ENCODE measurements at regions of chr7 and their contacts with region 1.

Region 1: GRCh38 chr7:38660427-38661099 is 29.4 kb upstream of the AMPH start:
- DNase-seq: peak; percentile 73
- H3K4me3 ChIP-seq: no peak overlapping the region
- H3K27ac ChIP-seq: no peak overlapping the region
- H3K4me1 ChIP-seq: peaks cover 11% of the 10 kb centered on the region
- H3K27me3 ChIP-seq: peaks cover 17% of the 10 kb centered on the region
- CTCF ChIP-seq: peak; percentile 88

Region 2: DNA sequence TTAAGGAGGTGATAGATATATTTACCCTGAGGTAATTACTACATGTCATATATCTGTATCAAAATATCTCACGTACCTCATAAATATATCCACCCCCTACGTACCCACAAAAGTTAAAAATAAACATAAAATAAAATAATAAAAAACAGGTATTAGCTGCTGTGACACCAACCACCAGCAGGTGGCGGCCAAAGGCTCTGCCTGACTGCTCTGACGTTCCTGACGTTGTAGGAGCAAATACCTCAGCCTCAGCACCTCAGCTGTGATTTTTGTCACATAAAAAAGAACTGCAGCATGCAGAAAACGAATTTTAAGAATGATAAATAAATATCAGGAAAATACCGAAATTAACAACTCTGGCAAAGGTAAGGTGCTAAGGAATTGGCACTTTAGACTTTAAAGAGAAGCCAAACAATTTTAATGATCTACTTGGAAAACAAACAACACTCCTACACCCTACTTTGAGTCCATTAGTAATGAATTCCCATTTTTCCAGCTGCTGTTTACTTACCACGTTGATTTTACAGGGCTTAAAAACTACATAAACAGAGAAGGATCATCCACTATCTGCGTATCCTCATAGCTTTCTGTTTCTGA is 261.7 kb before region 1 on chr7:
- CTCF ChIA-PET with region 1: interaction called, 6 read pairs
- POLR2A ChIA-PET with region 1: no interaction called
- intact Hi-C with region 1: loop called (anchors 1 kb)
- DNase-seq: peak; percentile 55
- H3K4me3 ChIP-seq: no peak overlapping the region
- H3K27ac ChIP-seq: no peak overlapping the region
- H3K4me1 ChIP-seq: no peaks in the 10 kb centered on the region
- H3K27me3 ChIP-seq: no peaks in the 10 kb centered on the region
- CTCF ChIP-seq: peak; percentile 92

Region 3: GRCh38 chr7:38451840-38452239 is 208.7 kb before region 1 on chr7:
- CTCF ChIA-PET with region 1: interaction called, 4 read pairs
- POLR2A ChIA-PET with region 1: no interaction called
- intact Hi-C with region 1: loop called (anchors 1 kb)
- DNase-seq: peak; percentile 32
- H3K4me3 ChIP-seq: no peak overlapping the region
- H3K27ac ChIP-seq: no peak overlapping the region
- H3K4me1 ChIP-seq: no peaks in the 10 kb centered on the region
- H3K27me3 ChIP-seq: peaks cover 7% of the 10 kb centered on the region
- CTCF ChIP-seq: peak; percentile 39; the same call in 1 of the 2 replicates

Region 4: GRCh38 chr7:38709123-38709522 is 48.6 kb after region 1 on chr7:
- CTCF ChIA-PET with region 1: no interaction called
- POLR2A ChIA-PET with region 1: no interaction called
- intact Hi-C with region 1: no loop called
- DNase-seq: no peak
- H3K4me3 ChIP-seq: no peak overlapping the region
- H3K27ac ChIP-seq: no peak overlapping the region
- H3K4me1 ChIP-seq: no peaks in the 10 kb centered on the region
- H3K27me3 ChIP-seq: no peaks in the 10 kb centered on the region
- CTCF ChIP-seq: no peak